Mucosa of descending colon (tissue), 3 donors: ENCODE measurements at regions of chr6 and their contacts with region 1.

Region 1: DNA sequence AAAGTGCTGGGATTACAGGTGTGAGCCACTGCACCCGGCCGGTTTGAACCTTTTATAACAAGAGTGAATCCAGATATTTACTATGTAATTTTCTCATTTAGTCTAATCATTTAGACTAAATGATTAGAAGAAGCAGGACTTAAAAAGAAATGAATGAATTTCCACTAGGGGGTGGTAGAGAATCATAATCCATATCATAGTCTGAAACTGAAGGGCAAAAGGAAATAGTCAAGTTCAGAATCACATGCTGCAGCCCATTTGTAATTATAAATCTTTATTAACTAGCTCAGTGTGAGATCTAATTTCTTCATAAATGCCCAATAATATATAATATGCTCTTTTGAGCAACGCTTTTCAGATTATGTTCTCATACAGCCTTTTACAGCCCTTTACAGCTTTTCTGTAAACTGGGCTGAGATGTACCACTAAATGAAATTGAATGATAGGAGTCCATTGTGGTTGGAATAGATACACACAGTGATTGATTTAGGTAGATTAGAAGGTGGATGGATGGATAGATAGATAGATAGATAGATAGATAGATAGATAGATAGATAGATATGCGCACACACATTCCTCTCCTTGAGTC is 31.8 kb downstream of the PSMB9 start:
- DNase-seq: no peak
- ATAC-seq: peak; percentile 71
- H3K4me3 ChIP-seq: no peak overlapping the region
- H3K4me1 ChIP-seq: no peaks in the 10 kb centered on the region
- CTCF ChIP-seq: peak; percentile 10

Region 2: GRCh38 chr6:32940656-32941213 is 54.9 kb after region 1 on chr6 and contains the start of gene HLA-DMB:
- intact Hi-C with region 1: loop called in 1 of 2 experiments (anchors 10 kb)
- DNase-seq: peak in 1 of 3 donors; percentile 80
- ATAC-seq: peak; percentile 90
- H3K4me3 ChIP-seq: no peak within 1 kb of the TSS
- H3K4me1 ChIP-seq: peaks cover 19% of the 10 kb centered on the region
- CTCF ChIP-seq: no peak
- total RNA-seq, gene HLA-DMB: 10.8 to 27.1 (median 22.8) TPM

Region 3: DNA sequence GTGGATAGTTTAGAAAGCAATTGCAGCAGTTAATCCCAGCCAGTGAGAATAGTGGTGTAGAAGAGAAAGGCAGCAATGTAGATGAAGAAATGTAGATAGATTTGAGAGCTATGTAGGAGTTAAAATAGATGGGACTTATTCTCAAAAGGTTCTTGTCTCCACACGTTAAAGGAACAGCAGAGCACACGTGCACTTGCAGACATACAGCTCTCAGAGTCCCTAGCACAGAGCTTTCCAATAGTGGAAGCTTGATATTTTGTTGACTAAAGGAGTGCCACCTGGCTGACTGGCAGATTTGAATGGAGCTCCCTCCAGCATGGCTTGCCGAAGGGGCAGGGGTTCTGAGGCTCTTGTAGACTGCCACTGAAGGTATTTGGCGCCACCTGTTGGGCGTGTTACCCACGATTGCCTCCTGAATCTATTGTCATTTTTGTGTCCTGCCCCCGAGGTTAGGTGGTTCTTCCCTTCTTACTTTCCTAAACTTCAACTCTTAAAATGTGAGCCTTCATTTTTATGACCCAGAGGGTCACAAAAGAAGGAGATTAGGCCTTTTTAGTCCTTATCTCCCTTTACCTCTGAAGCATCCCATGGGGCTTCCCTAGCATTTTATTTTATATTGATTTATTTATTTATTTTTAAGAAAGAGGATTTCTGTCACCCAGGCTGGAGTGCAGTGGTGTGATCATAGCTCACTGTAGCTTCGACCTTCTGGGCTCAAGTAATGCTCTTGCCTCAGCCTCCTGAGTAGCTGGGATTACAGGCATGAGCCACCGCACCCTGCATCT is 99.0 kb after region 1 on chr6:
- intact Hi-C with region 1: loop called in 1 of 2 experiments (anchors 10 kb)
- DNase-seq: peak; percentile 92 to 100 (median 93)
- ATAC-seq: peak; percentile 88
- H3K4me3 ChIP-seq: no peak overlapping the region
- H3K4me1 ChIP-seq: peaks cover 48% of the 10 kb centered on the region
- CTCF ChIP-seq: peak; percentile 63

Region 4: GRCh38 chr6:33126101-33126714 is 240.4 kb after region 1 on chr6:
- intact Hi-C with region 1: no loop called
- DNase-seq: peak in 2 of 3 donors; percentile 73 to 92
- ATAC-seq: peak; percentile 70
- H3K4me3 ChIP-seq: no peak overlapping the region
- H3K4me1 ChIP-seq: no peaks in the 10 kb centered on the region
- CTCF ChIP-seq: peak; percentile 42